ENCODE measurements at regions of chr16 and their contacts with region 1.

Region 1: GRCh38 chr16:72921630-72922029 is 126.3 kb downstream of the ZFHX3 start:
- DNase-seq: peak; percentile 89
- H3K4me3 ChIP-seq: peak overlapping the region; percentile 34 to 53
- H3K27ac ChIP-seq: peak overlapping the region; percentile 43 to 95; a peak in 3 of 4 replicates
- H3K4me1 ChIP-seq: peaks cover 14 to 30% of the 10 kb centered on the region in 2 experiments; a peak in 3 of 4 replicates
- H3K27me3 ChIP-seq: no peaks in the 10 kb centered on the region
- CTCF ChIP-seq: no peak
- EP300 ChIP-seq: peak in 1 of 2 experiments; percentile 58; a peak in 2 of 4 replicates
- RAD21 ChIP-seq: peak; percentile 36

Region 2: GRCh38 chr16:72932050-72932449 is 10.4 kb after region 1 on chr16:
- CTCF ChIA-PET with region 1: interaction called, 19 read pairs
- POLR2A ChIA-PET with region 1: no interaction called
- DNase-seq: no peak
- H3K4me3 ChIP-seq: no peak overlapping the region
- H3K27ac ChIP-seq: no peak overlapping the region
- H3K4me1 ChIP-seq: peaks cover 18 to 20% of the 10 kb centered on the region in 2 experiments; a peak in 2 of 4 replicates
- H3K27me3 ChIP-seq: no peaks in the 10 kb centered on the region
- CTCF ChIP-seq: no peak
- EP300 ChIP-seq: no peak
- RAD21 ChIP-seq: no peak